ENCODE measurements at regions of chr17 and their contacts with region 1.

Region 1: GRCh38 chr17:40287494-40288369 is at the start of gene CDC6:
- DNase-seq: peak; percentile 99
- H3K4me3 Mint-ChIP-seq: peak within 1 kb of the TSS; percentile 99
- H3K27ac Mint-ChIP-seq: peak within 1 kb of the TSS; percentile 97
- H3K4me1 Mint-ChIP-seq: peaks cover 60% of the 10 kb centered on the region
- H3K27me3 Mint-ChIP-seq: no peaks in the 10 kb centered on the region
- total RNA-seq, gene CDC6: 67.5 to 69.9 TPM

Region 2: GRCh38 chr17:40086150-40087044 is 201.3 kb before region 1 on chr17:
- CTCF ChIA-PET with region 1: no interaction called
- POLR2A ChIA-PET with region 1: no interaction called
- DNase-seq: peak; percentile 54
- H3K4me3 Mint-ChIP-seq: no peak overlapping the region
- H3K27ac Mint-ChIP-seq: no peak overlapping the region
- H3K4me1 Mint-ChIP-seq: no peaks in the 10 kb centered on the region
- H3K27me3 Mint-ChIP-seq: no peaks in the 10 kb centered on the region

Region 3: GRCh38 chr17:40203131-40203530 is 84.6 kb before region 1 on chr17:
- CTCF ChIA-PET with region 1: interaction called, 75 read pairs
- POLR2A ChIA-PET with region 1: interaction called, 19 read pairs
- DNase-seq: no peak
- H3K4me3 Mint-ChIP-seq: no peak overlapping the region
- H3K27ac Mint-ChIP-seq: no peak overlapping the region
- H3K4me1 Mint-ChIP-seq: peaks cover 5% of the 10 kb centered on the region
- H3K27me3 Mint-ChIP-seq: peaks cover 11% of the 10 kb centered on the region

Region 4: GRCh38 chr17:40309031-40309948 is 21.6 kb after region 1 on chr17 and contains the start of gene RARA:
- CTCF ChIA-PET with region 1: interaction called, 3 read pairs
- POLR2A ChIA-PET with region 1: interaction called, 19 read pairs
- DNase-seq: peak; percentile 16
- H3K4me3 Mint-ChIP-seq: no peak within 1 kb of the TSS
- H3K27ac Mint-ChIP-seq: no peak within 1 kb of the TSS
- H3K4me1 Mint-ChIP-seq: peaks cover 48% of the 10 kb centered on the region
- H3K27me3 Mint-ChIP-seq: no peaks in the 10 kb centered on the region
- total RNA-seq, gene RARA: 65.2 to 65.5 TPM

Region 5: DNA sequence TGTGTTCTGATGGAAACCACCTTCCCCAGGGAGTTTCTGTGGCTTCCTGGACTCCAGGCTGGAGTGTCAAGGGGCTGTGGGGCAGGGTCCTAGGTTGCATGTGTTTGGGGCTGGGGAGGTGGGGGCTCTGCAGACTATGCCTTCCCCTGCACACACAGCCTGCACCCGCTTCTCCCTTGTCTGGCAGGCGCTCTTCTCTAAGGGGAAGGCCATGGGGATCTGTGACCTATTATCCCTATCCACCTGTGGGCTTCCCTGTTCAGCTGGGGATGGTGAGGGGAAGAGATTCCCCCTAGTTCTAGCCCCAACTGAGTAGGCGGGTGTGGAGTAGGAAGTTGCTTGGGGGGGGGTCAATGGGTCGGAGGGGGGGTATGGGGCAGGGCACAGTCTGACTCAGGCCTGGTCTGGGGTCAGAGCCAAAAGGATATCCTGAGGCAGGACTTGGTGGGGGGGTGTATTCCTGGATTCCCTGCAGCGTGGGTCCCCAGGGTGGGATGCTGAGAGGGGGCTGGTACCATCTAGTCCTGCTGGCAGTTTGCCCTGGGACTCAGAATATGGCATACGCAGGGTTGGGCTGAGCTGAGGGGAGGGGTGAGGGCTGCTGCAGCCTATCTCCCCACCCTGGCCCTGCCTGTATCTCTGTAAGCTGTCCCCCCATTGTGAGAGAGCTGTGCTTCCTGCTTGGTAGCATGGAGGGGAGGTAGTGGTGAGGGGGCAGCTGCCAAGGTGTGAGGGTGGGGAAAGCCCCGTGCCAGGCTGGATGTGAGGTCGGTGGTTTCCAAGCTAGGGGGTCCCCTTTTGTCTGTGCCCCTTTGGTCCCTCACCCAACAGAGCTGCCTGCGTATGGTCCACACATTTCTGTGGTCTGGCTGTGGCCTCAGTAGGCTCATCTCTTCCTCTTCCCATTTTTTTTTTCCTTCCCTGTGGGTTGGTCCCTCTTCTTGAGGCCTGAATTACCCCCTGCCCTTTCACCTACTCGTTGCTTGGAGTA is 36.0 kb after region 1 on chr17:
- CTCF ChIA-PET with region 1: no interaction called
- POLR2A ChIA-PET with region 1: interaction called, 36 read pairs
- DNase-seq: peak; percentile 52
- H3K4me3 Mint-ChIP-seq: peak overlapping the region; percentile 90
- H3K27ac Mint-ChIP-seq: peak overlapping the region; percentile 93
- H3K4me1 Mint-ChIP-seq: peaks cover 88% of the 10 kb centered on the region
- H3K27me3 Mint-ChIP-seq: no peaks in the 10 kb centered on the region

Region 6: GRCh38 chr17:40333781-40334448 is 46.2 kb after region 1 on chr17:
- CTCF ChIA-PET with region 1: no interaction called
- POLR2A ChIA-PET with region 1: no interaction called
- DNase-seq: no peak
- H3K4me3 Mint-ChIP-seq: peak overlapping the region; percentile 60
- H3K27ac Mint-ChIP-seq: peak overlapping the region; percentile 72
- H3K4me1 Mint-ChIP-seq: peaks cover 86% of the 10 kb centered on the region
- H3K27me3 Mint-ChIP-seq: no peaks in the 10 kb centered on the region

Measured in activated CD4-positive, alpha-beta memory T cell treated with anti-CD3 and anti-CD28 coated beads, Interleukin-2, amount 10 ng/mL, durations not matched to agents 7 days and 5 days (primary cell).